Panc1 (cell line): ENCODE measurements at regions of chr16 and their contacts with region 1.

Region 1: DNA sequence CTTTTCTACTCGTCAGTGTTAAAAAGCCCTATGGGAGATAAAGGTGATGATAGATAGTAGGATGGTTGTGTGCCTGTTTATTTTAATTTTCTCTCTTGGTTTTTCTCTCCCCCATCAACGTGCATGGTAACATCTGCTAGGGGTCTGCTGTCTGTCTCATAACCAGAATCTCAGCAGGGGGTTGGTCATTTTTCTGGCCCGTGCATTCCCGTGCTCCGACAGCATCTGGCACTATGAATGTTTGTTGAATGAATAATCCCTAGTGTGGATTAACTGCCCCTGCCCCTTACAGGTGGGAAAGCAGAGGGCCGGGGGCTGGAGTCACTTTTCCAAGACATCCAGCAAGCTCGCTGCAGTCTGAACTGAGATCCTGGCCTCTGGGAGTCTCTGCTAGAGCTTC is 6.3 kb downstream of the CA5A start:
- DNase-seq: no peak
- ATAC-seq: no peak
- H3K4me3 ChIP-seq: no peak overlapping the region
- H3K27ac ChIP-seq: no peak overlapping the region
- H3K4me1 ChIP-seq: peaks cover 2% of the 10 kb centered on the region; the same call in 1 of the 2 replicates
- H3K27me3 ChIP-seq: no peaks in the 10 kb centered on the region
- CTCF ChIP-seq: no peak

Region 2: DNA sequence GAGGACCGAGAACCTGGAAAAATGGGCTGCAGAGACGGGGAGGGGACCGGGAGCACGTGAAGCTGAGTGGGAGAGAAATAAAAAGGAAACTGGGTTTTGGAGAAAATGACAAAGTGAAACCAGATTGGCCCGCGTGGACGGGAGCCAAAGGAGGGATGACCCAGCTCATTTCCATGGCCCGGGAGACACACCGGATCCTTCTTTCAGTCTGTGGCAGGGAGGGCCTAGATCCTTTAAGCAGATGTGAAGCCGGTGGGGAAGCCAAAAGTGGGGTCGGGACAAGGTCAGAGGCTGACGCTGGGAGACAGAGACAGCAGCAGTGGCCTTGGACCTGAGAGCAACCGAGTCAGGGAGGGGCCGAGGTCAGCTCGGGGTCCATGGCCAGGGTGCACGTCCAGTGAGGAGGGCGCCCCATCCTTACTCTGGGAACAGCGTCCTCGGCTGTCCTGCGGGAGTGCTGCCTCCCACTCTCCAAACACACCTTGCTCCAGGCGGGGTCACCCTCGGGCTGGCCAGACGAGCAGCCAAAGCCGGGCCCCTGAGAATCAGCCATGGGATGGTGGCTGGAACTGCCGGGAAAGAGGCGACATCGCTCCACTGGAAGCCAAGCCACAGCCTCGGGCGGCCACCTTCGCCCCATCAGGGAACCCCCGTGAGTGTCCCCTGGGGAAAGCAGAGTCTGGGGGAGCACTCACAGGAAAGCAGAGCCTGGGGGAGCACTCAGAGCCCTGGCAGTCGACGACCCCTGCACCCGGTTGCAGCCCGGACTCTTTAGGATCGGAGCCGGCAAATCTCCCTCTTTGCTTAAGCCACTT is 10.9 kb before region 1 on chr16:
- CTCF ChIA-PET with region 1: interaction called, 11 read pairs
- POLR2A ChIA-PET with region 1: no interaction called
- in situ Hi-C with region 1: no loop called
- intact Hi-C with region 1: no loop called
- DNase-seq: no peak
- ATAC-seq: no peak
- H3K4me3 ChIP-seq: no peak overlapping the region
- H3K27ac ChIP-seq: no peak overlapping the region
- H3K4me1 ChIP-seq: no peaks in the 10 kb centered on the region
- H3K27me3 ChIP-seq: no peaks in the 10 kb centered on the region
- CTCF ChIP-seq: no peak